ENCODE measurements at regions of chr17 and their contacts with region 1.

Region 1: DNA sequence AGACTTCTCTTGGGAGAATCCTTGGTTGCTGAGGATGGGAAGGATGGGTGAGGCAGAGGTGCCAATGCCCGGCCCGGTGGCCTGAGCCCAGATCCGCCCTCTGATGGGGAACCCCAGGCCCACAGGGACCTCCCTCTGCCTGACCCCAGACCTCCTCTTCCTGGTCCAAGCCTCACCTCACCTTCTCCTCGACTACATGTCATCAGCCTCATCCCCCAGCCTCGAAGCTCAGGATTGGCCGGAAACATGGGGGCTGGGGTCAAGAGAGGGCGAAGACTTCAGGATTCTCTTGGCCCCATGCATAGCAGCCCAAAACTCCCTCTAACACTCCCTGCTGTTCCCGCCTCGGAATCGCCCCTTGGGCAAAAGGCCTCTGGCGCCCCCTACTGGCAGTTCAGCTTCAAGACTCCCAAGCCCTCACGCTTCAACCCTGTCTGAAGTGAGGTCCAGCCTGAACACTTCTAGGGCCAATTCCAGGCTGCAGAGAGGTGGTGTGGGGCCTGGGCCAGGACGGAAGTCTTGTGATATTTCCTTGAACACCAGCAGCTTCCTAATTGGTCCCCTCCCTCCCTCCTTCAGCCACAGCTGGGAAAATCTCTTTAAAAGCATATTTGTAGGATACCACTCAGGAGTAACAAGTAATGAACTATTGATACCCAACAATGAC is 47.2 kb downstream of the ARHGAP27 start:
- DNase-seq: peak; percentile 87
- H3K4me3 Mint-ChIP-seq: no peak overlapping the region
- H3K27ac Mint-ChIP-seq: no peak overlapping the region
- H3K4me1 Mint-ChIP-seq: peaks cover 5% of the 10 kb centered on the region
- H3K27me3 Mint-ChIP-seq: no peaks in the 10 kb centered on the region
- CTCF ChIP-seq: peak; percentile 94

Region 2: GRCh38 chr17:45235416-45236281 is 149.8 kb before region 1 on chr17:
- CTCF ChIA-PET with region 1: interaction called, 10 read pairs
- POLR2A ChIA-PET with region 1: no interaction called
- intact Hi-C with region 1: no loop called
- DNase-seq: peak; percentile 82
- H3K4me3 Mint-ChIP-seq: no peak overlapping the region
- H3K27ac Mint-ChIP-seq: no peak overlapping the region
- H3K4me1 Mint-ChIP-seq: peaks cover under 1% of the 10 kb centered on the region
- H3K27me3 Mint-ChIP-seq: no peaks in the 10 kb centered on the region
- CTCF ChIP-seq: peak; percentile 78

Region 3: DNA sequence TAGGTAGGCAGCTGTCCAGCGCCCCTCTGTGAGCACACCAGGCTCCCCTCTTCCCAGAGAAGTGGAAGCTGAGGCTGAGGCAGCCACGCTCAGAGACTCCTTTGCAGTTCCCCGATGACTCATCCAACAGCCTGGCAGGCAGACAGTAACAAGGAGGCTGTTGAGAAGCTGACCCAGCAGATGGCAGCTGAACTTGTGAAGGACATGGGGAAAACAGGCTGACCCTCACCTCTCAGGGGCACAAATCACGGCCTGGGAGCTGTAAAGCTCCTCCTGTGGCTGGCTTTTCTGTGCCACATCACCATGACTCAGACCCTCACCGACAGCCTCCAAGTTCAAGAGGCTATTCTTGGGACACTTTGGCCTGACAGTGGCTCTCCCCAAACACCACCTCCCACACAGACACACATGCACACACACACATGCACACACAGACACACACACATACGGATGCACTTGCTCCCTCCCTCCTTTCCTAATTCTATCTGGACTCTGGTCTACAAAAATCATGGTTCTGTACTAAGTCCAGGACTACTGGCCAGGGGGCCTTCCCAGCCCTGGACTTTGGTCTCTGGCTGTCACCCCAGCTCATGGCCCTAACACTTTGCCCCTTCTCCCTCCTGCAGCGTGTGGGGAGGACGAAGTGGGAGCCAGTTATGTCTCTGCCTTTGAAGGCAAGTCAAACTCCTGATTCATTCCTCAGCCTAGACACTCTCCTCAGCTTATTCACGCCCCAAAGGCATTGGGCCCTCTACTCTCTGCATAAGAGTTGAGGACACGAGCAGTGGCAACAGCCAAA is 91.9 kb before region 1 on chr17:
- CTCF ChIA-PET with region 1: interaction called, 19 read pairs
- POLR2A ChIA-PET with region 1: interaction called, 7 read pairs
- intact Hi-C with region 1: no loop called
- DNase-seq: peak; percentile 95
- H3K4me3 Mint-ChIP-seq: peak overlapping the region; percentile 23
- H3K27ac Mint-ChIP-seq: peak overlapping the region; percentile 68
- H3K4me1 Mint-ChIP-seq: peaks cover 50% of the 10 kb centered on the region
- H3K27me3 Mint-ChIP-seq: no peaks in the 10 kb centered on the region
- CTCF ChIP-seq: no peak

Region 4: GRCh38 chr17:45317112-45317928 is 68.1 kb before region 1 on chr17:
- CTCF ChIA-PET with region 1: interaction called, 6 read pairs
- POLR2A ChIA-PET with region 1: interaction called, 17 read pairs
- intact Hi-C with region 1: no loop called
- DNase-seq: peak; percentile 100
- H3K4me3 Mint-ChIP-seq: peak overlapping the region; percentile 86
- H3K27ac Mint-ChIP-seq: peak overlapping the region; percentile 98
- H3K4me1 Mint-ChIP-seq: peaks cover 71% of the 10 kb centered on the region
- H3K27me3 Mint-ChIP-seq: no peaks in the 10 kb centered on the region
- CTCF ChIP-seq: no peak

Region 5: GRCh38 chr17:45346216-45347015 is 39.0 kb before region 1 on chr17:
- CTCF ChIA-PET with region 1: no interaction called
- POLR2A ChIA-PET with region 1: no interaction called
- intact Hi-C with region 1: no loop called
- DNase-seq: no peak
- H3K4me3 Mint-ChIP-seq: no peak overlapping the region
- H3K27ac Mint-ChIP-seq: no peak overlapping the region
- H3K4me1 Mint-ChIP-seq: peaks cover 6% of the 10 kb centered on the region
- H3K27me3 Mint-ChIP-seq: no peaks in the 10 kb centered on the region
- CTCF ChIP-seq: no peak

Measured in MCF 10A (cell line).